SK-N-SH (cell line): ENCODE measurements at regions of chr20 and their contacts with region 1.

Region 1: GRCh38 chr20:59571551-59572314 is 32.6 kb upstream of the PHACTR3 start:
- DNase-seq: peak; percentile 91
- H3K4me3 ChIP-seq: peak overlapping the region; percentile 41 to 58
- H3K27ac ChIP-seq: no peak overlapping the region
- H3K4me1 ChIP-seq: peaks cover 0 to 15% of the 10 kb centered on the region in 2 experiments; a peak in 1 of 4 replicates
- H3K27me3 ChIP-seq: no peaks in the 10 kb centered on the region
- CTCF ChIP-seq: peak; percentile 93
- EP300 ChIP-seq: no peak
- RAD21 ChIP-seq: peak; percentile 68

Region 2: GRCh38 chr20:59518881-59519688 is 52.6 kb before region 1 on chr20:
- CTCF ChIA-PET with region 1: interaction called, 12 read pairs
- POLR2A ChIA-PET with region 1: no interaction called
- DNase-seq: peak; percentile 73
- H3K4me3 ChIP-seq: no peak overlapping the region
- H3K27ac ChIP-seq: no peak overlapping the region
- H3K4me1 ChIP-seq: peaks cover 0 to 11% of the 10 kb centered on the region in 2 experiments; a peak in 1 of 4 replicates
- H3K27me3 ChIP-seq: no peaks in the 10 kb centered on the region
- CTCF ChIP-seq: peak; percentile 73
- EP300 ChIP-seq: no peak
- RAD21 ChIP-seq: no peak; the same call in 1 of the 2 replicates

Region 3: GRCh38 chr20:59560588-59561227 is 11.0 kb before region 1 on chr20:
- CTCF ChIA-PET with region 1: interaction called, 107 read pairs
- POLR2A ChIA-PET with region 1: no interaction called
- DNase-seq: peak; percentile 76
- H3K4me3 ChIP-seq: no peak overlapping the region
- H3K27ac ChIP-seq: no peak overlapping the region
- H3K4me1 ChIP-seq: peaks cover 0 to 7% of the 10 kb centered on the region in 2 experiments; a peak in 1 of 4 replicates
- H3K27me3 ChIP-seq: no peaks in the 10 kb centered on the region
- CTCF ChIP-seq: peak; percentile 64
- EP300 ChIP-seq: no peak
- RAD21 ChIP-seq: peak; percentile 20; the same call in 1 of the 2 replicates

Region 4: DNA sequence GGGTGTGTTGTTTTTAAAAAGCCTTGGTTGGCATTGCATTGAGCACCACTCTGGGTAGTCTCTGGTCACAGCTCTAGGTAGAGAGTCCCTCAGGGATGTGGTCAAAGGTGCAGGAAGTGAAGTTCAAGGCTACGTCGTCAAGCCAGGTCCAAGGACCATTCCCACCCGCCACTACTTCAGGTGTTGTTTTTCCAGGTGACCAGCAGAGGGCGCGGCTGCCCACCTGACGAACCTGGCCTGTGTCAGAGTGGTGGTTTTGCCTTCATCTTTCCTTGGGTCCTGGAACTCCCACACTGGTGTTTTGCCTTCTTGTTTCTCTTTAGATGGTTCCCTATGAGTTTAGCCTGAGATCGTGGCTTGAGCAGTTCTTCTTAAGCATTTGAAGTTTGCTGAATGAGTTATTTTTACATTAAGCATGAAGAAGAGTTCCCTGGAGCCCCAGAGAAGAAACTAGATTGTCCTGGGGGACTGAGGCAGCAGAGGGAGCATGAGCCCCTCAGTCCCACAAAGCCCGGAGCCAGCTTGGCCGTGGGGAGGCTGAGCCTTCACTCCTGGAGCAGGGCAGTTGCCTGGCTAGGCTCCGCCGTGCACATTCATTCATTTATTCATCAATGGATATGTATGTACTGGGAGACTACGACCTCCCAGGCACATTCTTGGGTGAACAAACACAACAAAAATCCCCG is 27.0 kb after region 1 on chr20:
- CTCF ChIA-PET with region 1: interaction called, 23 read pairs
- POLR2A ChIA-PET with region 1: no interaction called
- DNase-seq: peak; percentile 85
- H3K4me3 ChIP-seq: no peak overlapping the region; a peak in 1 of 4 replicates
- H3K27ac ChIP-seq: no peak overlapping the region
- H3K4me1 ChIP-seq: no peaks in the 10 kb centered on the region; a peak in 1 of 4 replicates
- H3K27me3 ChIP-seq: no peaks in the 10 kb centered on the region; the same call in 1 of the 2 replicates
- CTCF ChIP-seq: peak; percentile 73
- EP300 ChIP-seq: no peak
- RAD21 ChIP-seq: peak; percentile 89

Region 5: DNA sequence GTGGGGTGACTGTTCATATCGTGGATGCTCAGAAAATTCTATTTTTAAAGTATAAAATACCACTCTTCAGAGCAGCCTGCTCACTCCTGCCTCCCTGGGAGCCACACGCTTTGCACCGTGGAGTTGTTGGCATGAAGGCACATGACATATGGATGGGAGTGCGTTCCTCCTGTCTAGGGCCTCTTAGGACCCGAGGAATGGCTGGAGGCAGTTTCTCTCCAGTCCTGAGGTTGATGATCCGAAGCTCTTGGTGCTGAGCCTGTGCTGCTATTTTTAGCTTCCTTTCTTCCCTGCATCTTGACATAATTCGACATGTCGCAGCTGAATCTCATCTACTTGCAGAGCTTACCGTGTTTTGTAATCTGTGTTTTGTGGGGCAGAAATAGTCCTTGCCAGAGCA is 106.6 kb after region 1 on chr20:
- CTCF ChIA-PET with region 1: no interaction called
- POLR2A ChIA-PET with region 1: no interaction called
- DNase-seq: no peak
- H3K4me3 ChIP-seq: no peak overlapping the region
- H3K27ac ChIP-seq: no peak overlapping the region
- H3K4me1 ChIP-seq: peaks cover 0 to 7% of the 10 kb centered on the region in 2 experiments; a peak in 1 of 4 replicates
- H3K27me3 ChIP-seq: no peaks in the 10 kb centered on the region
- CTCF ChIP-seq: no peak
- EP300 ChIP-seq: no peak
- RAD21 ChIP-seq: no peak

Region 6: DNA sequence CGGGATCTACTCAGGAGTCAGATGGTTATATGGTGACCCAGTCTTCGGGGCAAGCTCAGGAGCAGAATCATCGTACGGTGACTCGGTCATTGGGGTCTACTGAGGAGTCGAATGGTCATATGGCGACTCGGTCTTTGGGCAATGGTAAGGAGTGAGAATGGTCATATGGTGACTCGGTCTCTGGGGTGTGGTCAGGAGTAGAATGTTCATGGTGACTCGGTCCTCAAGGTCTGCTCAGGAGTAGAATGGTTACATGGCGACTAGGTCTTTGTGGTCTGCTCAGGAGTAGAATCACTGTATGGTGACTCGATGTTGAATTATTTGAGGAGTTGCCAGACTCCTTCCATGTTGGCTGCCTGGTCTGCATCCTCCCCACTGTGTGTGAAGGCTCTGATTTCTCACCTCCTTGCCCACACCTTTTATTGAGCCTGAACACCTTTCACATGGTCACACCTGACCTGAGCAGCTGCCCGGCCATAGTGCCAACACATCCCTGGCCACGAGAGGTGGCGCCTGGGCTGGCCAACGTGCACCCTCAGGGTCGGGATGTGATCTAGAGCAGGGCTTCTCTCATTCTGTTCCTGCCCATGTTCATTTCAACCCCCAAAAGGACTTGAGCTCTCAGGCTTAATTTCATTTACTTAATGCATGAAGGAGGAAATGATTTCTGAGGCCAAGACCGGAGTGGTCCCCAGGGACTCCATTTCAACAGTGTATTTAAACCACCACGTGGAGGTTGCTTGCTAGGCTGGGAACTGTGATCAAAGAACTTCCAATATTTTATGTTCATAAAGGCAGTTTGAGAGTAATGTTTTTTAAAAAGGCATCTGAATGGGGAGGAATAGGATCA is 152.1 kb after region 1 on chr20:
- CTCF ChIA-PET with region 1: interaction called, 10 read pairs
- POLR2A ChIA-PET with region 1: no interaction called
- DNase-seq: no peak
- H3K4me3 ChIP-seq: no peak overlapping the region
- H3K27ac ChIP-seq: no peak overlapping the region
- H3K4me1 ChIP-seq: peaks cover 0 to 5% of the 10 kb centered on the region in 2 experiments; a peak in 1 of 4 replicates
- H3K27me3 ChIP-seq: no peaks in the 10 kb centered on the region
- CTCF ChIP-seq: no peak
- EP300 ChIP-seq: no peak
- RAD21 ChIP-seq: no peak

Region 7: DNA sequence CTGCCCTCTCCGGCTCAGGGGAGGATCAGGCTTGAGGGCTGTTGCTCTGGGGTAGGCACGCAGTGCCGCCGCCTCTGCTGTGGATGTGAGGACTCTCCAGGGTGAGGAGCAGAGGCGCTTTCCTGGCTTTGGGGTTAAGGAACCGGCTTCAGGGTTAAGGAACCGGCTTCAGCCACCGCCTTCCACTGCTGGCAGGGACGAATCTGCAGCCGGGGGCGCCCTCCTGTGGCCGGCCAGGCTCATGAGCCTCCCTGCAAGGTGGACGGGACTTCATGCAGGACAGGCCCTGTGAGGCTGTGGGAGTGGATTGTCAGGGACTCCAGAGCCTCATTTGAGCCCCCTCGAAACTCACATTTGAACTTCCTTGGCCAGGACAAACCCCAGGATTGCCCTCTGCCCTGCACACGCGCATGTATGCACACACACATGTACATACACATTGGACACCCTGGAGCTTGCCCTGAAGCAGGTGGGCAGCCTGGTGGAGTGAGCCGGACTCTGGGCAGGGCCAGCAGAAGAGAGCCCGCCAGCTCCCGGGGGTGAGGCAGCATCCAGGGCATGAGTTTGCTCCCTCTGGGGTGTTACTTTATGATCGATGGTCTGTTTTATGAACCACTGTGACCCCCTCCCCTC is 179.4 kb after region 1 on chr20:
- CTCF ChIA-PET with region 1: interaction called, 62 read pairs
- POLR2A ChIA-PET with region 1: no interaction called
- DNase-seq: peak; percentile 92
- H3K4me3 ChIP-seq: no peak overlapping the region; a peak in 1 of 4 replicates
- H3K27ac ChIP-seq: no peak overlapping the region
- H3K4me1 ChIP-seq: peaks cover 0 to 3% of the 10 kb centered on the region in 2 experiments; a peak in 1 of 4 replicates
- H3K27me3 ChIP-seq: no peaks in the 10 kb centered on the region
- CTCF ChIP-seq: peak; percentile 13
- EP300 ChIP-seq: no peak
- RAD21 ChIP-seq: peak; percentile 91

Region 8: DNA sequence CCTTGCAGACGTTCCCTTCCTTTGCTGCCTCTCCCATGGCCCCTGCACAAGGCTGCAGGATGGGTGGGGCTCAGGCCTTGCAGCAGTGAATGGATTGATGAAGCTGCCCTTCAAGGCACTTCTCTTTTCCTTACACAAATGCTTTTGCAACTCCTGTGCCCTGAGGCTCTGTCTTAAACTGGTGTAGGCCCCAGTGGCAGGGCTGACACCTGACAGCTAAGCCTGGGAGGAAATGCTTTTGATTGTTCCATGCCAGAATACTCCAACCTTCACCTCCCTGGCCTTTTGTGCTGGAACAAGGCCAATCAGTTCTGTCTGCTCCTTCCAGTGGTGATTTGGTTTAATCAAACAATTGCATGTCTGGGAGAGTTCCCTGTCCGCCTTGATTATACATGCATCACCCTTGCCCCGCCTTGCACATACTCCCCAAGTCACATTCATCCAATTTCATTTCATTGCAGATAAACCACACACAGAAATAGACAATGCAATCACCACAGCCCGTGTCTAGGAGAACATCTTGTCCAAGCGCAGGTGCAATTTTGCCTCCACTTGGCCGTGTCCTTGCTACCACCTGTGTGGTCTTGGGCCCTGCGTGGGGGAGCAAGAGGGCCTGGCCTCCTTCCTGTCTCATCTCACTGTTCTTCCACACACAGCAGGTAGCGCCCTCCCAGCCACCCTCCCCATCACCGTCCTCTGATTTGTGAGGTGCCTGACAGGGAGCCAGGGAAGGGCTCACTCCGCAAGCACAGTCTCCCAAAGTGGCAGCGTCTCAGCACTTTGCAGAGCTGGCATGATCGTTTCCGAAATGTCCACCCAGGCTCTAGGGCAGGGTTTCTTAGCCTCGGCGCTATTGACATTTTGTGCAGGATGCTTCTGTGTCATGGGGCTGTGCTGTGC is 506.9 kb after region 1 on chr20:
- CTCF ChIA-PET with region 1: no interaction called
- POLR2A ChIA-PET with region 1: no interaction called
- DNase-seq: no peak
- H3K4me3 ChIP-seq: no peak overlapping the region
- H3K27ac ChIP-seq: no peak overlapping the region
- H3K4me1 ChIP-seq: peaks cover 0 to 6% of the 10 kb centered on the region in 2 experiments; a peak in 1 of 4 replicates
- H3K27me3 ChIP-seq: no peaks in the 10 kb centered on the region
- CTCF ChIP-seq: no peak
- EP300 ChIP-seq: no peak
- RAD21 ChIP-seq: no peak